Aorta (tissue), 5 donors: ENCODE measurements at regions of chr3 and their contacts with region 1.

Region 1: DNA sequence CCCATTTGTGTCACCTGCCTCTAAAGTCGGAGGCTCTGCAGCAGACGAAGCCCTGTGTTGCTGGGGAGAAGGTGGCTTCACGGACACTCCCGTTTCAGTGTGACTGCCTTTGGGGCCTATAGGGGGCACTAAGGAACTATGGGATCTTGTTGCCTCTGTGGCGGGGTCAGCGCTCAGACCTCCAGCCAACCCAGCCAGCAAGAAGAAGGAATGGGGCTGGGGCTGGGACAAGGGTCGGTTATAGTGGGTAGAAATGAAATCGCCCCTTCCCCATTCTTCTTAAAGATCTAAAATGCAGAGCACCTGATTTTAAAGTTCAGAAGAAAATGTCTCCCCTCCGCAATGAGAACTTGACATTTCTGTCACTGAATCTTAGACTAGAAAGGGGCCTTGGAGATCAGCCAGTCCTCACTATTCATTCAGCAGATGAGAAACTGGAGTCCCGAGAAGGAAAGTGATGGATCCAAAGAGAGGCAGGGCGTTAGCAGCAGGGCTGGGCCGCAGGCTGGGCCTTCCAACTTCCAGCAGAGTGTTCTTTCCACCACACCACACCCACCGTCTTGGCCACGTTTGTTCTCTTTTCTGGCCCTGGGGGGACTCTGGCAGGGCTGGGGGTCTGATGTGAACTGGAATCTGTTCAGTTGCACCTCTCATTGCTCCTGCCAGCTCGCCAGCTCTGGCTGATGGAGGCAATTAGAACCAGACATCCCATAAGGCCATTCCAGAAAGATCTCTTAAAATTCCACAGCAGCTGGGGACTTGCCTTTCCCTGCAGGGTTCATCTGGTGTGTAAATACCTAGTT is 195.4 kb downstream of the OPA1 start:
- DNase-seq: peak in 1 of 2 donors; percentile 59
- ATAC-seq: peak; percentile 86
- H3K4me3 ChIP-seq: no peak overlapping the region
- H3K27ac ChIP-seq: no peak overlapping the region
- H3K4me1 ChIP-seq: no peaks in the 10 kb centered on the region
- H3K27me3 ChIP-seq: peaks cover 0 to 2% of the 10 kb centered on the region in 2 donors

Region 2: DNA sequence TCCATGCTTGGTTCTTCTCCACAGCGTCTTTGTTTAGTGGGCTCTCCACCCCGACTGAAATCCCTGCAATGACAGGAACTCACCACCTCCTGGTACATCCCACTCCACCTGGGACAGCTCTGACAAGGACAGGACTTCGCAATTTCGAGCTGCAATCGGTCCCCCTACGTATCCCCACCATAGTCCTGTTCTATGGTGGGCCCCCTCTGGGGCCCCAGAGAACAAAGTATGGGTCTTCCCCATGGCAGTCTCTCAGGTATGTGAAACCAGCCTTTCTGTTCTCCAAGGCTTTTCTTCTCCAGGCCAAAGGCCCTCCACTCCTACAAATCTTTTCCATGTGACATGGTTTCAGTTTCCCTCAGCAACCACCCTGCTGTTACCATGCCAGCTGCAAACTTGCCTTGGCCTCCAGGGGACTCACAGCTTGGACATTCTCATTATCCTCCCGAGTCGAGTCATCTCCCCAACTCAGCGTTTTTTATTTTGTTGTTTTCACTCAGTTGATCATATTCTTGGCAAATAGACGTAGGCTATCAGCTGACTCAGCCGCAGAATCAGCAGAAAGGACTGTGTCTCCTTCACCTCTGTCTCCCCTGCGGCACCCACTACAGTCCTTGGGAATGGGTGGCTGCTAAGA is 37.9 kb after region 1 on chr3:
- intact Hi-C with region 1: no loop called
- DNase-seq: peak in 1 of 2 donors; percentile 52
- ATAC-seq: no peak
- H3K4me3 ChIP-seq: no peak overlapping the region
- H3K27ac ChIP-seq: no peak overlapping the region
- H3K4me1 ChIP-seq: no peaks in the 10 kb centered on the region
- H3K27me3 ChIP-seq: no peaks in the 10 kb centered on the region

Region 3: DNA sequence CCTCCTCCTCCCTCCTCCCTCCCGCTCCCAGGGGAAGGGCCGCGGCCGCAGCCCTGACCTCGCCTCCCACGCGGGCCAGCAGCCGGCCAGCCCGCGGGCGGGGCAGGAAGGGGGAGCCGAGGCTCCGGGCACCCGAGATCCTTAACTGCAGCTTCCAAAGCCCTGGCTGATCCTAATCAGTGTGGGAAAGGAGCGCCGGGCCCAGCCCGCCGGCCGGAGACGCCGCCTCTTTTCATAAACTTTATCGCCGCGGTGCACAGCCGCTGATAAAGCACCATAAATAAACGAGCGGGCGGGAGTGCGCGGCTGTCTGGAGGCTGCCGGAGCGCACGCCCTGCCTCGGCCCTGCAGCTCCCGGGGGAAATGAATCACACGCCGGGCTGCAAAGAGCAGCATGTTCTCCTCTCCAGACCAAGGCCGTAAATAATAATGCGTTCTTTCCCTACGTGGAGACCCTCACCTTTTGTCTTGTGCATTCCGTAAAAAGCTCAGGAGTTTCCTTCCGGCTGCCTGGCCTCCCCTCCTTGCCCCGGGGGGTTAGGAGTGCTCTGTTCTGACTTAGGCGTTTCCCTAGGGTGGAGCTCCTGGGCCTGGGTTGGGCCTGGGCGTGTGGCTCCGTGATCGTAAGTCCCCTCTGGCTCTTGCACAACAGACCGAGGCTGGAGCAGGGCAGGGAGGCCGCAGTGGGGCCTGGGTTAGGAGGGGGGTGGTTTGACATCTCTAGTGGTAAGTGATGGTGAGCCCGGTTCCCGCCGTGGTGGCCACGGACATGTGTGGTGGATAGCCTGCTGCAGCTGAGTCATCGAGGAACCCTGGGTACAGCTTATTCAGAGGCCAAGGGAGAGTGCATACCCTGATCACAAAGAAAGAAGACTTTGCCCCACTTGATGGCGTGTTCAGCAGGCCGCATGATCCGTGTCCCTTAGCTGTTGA is 215.0 kb after region 1 on chr3:
- intact Hi-C with region 1: loop called in 1 of 2 experiments (anchors 10 kb)
- DNase-seq: peak; percentile 95 to 96
- ATAC-seq: peak; percentile 94
- H3K4me3 ChIP-seq: peak overlapping the region in 1 of 2 donors; percentile 14
- H3K27ac ChIP-seq: peak overlapping the region in 1 of 2 donors; percentile 69
- H3K4me1 ChIP-seq: peaks cover under 1 to 1% of the 10 kb centered on the region in 2 donors
- H3K27me3 ChIP-seq: no peaks in the 10 kb centered on the region

Region 4: DNA sequence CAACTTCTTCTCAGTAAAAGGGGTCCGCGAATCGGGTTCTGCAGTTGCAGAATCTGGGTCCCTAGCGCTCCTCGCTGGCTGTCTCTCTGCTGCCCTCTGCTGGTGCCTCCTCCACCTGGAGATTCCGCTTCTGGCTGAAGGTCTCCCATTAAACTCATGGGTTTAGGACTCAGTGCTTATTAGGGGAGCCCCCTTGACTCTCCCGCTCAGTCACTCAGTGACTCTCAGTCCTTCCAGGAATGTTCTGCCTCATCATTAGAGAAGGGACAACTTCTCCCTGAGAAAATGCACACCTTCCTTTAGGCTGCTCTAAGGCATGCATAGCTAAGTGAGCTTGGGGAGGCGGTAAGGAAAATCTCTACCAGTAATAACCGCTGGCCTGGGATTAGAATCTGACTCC is 555.6 kb after region 1 on chr3:
- intact Hi-C with region 1: loop called in 1 of 2 experiments (anchors 10 kb)
- DNase-seq: peak; percentile 83 to 93
- ATAC-seq: peak; percentile 71
- H3K4me3 ChIP-seq: no peak overlapping the region
- H3K27ac ChIP-seq: no peak overlapping the region
- H3K4me1 ChIP-seq: no peaks in the 10 kb centered on the region
- H3K27me3 ChIP-seq: no peaks in the 10 kb centered on the region